ENCODE measurements at regions of chr4 and their contacts with region 1.

Region 1: GRCh38 chr4:77862478-77863216 is at the start of gene MRPL1:
- DNase-seq: peak; percentile 94
- ATAC-seq: peak; percentile 95
- H3K4me3 ChIP-seq: peak within 1 kb of the TSS; percentile 84 to 86 (median 86)
- H3K27ac ChIP-seq: peak within 1 kb of the TSS; percentile 95
- H3K4me1 ChIP-seq: peaks cover 48% of the 10 kb centered on the region
- H3K27me3 ChIP-seq: no peaks in the 10 kb centered on the region; a peak in 1 of 5 replicates
- CTCF ChIP-seq: peak; percentile 66
- EP300 ChIP-seq: peak; percentile 28 to 55; a peak in 3 of 4 replicates
- POLR2A ChIP-seq: peak; percentile 85 to 96; a peak in 3 of 4 replicates
- RAD21 ChIP-seq: peak; percentile 33; the same call in 1 of the 2 replicates
- total RNA-seq, gene MRPL1: 61.5 and 86.1 TPM in 2 replicates

Region 2: GRCh38 chr4:77819843-77820648 is 42.6 kb before region 1 on chr4:
- CTCF ChIA-PET with region 1: no interaction called
- POLR2A ChIA-PET with region 1: interaction called, 44 read pairs
- in situ Hi-C with region 1: loop called (anchors 5 kb)
- intact Hi-C with region 1: loop called (anchors 1 kb)
- DNase-seq: peak; percentile 52
- ATAC-seq: peak; percentile 69
- H3K4me3 ChIP-seq: peak overlapping the region; percentile 94 to 100 (median 99)
- H3K27ac ChIP-seq: peak overlapping the region; percentile 92
- H3K4me1 ChIP-seq: peaks cover 28% of the 10 kb centered on the region
- H3K27me3 ChIP-seq: no peaks in the 10 kb centered on the region; a peak in 1 of 5 replicates
- CTCF ChIP-seq: peak; percentile 22
- EP300 ChIP-seq: no peak
- POLR2A ChIP-seq: peak; percentile 70 to 83
- RAD21 ChIP-seq: peak; percentile 48; the same call in 1 of the 2 replicates

Region 3: DNA sequence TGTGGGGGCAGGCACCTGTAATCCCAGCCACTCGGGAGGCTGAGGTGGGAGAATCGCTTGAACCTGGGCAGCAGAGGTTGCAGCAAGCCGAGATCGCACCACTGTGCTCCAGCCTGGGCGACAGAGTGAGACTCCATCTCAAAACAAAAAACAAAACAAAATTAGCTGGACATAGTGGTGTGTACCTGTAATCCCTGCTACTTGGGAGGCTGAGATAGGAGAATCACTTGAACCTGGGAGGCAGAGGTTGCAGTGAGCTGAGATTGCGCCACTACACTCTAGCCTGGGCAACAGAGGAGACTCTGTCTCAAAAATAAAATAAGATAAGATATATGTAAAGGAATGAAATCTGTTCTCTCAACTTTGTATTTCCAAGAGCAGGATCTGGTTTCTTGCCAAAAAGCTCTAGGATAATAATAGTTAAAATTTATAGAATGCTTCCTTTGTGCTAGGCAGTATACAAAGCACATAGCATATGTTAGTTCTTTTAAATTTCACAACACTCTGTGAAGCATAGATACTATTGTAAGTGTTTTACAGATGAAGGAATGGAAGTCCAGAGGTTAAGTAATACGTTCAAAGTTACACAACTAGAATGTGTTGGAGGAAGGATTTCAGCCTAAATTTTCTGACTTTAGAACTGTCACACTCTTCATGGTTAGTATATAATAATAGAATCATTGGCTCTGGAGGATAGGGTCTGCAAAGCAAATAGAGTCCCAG is 10.2 kb after region 1 on chr4:
- CTCF ChIA-PET with region 1: no interaction called
- POLR2A ChIA-PET with region 1: interaction called, 19 read pairs
- in situ Hi-C with region 1: no loop called
- intact Hi-C with region 1: no loop called
- DNase-seq: peak; percentile 91
- ATAC-seq: peak; percentile 97
- H3K4me3 ChIP-seq: no peak overlapping the region; a peak in 1 of 6 replicates
- H3K27ac ChIP-seq: peak overlapping the region; percentile 72
- H3K4me1 ChIP-seq: peaks cover 61% of the 10 kb centered on the region
- H3K27me3 ChIP-seq: no peaks in the 10 kb centered on the region
- CTCF ChIP-seq: no peak
- EP300 ChIP-seq: peak; percentile 64 to 68; a peak in 2 of 4 replicates
- POLR2A ChIP-seq: no peak
- RAD21 ChIP-seq: no peak

Region 4: GRCh38 chr4:77881460-77882278 is 19.0 kb after region 1 on chr4:
- CTCF ChIA-PET with region 1: no interaction called
- POLR2A ChIA-PET with region 1: interaction called, 12 read pairs
- in situ Hi-C with region 1: no loop called
- intact Hi-C with region 1: no loop called
- DNase-seq: peak; percentile 80
- ATAC-seq: peak; percentile 99
- H3K4me3 ChIP-seq: no peak overlapping the region; a peak in 1 of 6 replicates
- H3K27ac ChIP-seq: peak overlapping the region; percentile 47
- H3K4me1 ChIP-seq: peaks cover 33% of the 10 kb centered on the region
- H3K27me3 ChIP-seq: no peaks in the 10 kb centered on the region
- CTCF ChIP-seq: peak; percentile 24; the same call in 1 of the 2 replicates
- EP300 ChIP-seq: peak in 1 of 2 experiments; percentile 33; a peak in 1 of 4 replicates
- POLR2A ChIP-seq: no peak
- RAD21 ChIP-seq: no peak